ENCODE measurements at regions of chr15 and their contacts with region 1.

Region 1: DNA sequence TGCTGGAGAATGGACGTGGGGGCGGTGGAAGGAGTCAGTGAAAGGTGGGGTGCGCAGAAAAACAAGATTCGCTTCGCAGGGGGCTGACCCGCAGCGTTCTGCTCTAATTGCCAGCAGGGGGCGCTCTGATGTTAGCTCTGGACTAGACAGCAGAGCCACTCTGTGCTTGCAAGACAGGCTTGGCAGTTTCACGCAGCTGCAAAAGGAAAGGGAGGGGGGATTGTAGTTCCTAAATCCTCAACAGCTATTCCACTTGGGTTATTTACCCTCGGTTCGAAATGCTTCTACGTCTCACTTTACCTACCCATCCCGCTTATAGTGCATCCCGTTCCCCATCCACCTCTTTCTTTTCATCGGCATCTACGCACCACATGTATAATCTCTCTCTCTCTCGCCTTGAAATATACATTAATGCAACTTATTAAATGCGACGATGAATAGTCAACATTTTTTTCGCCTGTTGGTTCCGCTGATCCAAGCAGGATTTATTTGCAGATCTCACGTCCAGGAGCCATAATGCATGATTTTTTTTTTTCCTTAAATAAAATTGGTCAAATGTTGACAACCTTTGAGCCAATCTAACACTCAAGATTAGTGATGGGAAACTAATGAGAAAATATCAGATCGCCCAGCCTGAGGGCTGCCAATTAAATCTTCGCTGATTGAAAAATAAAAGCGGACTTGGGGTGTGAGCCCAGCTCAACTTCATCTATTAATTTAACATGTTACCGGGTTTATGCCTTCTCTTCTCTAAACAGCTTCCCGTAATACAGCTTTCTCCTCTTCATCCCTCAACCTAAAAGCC is 216.4 kb downstream of the MEIS2 start:
- DNase-seq: peak; percentile 62 to 77
- H3K4me3 ChIP-seq: peak overlapping the region; percentile 25 to 55 (median 41)
- H3K27ac ChIP-seq: no peak overlapping the region
- H3K4me1 ChIP-seq: peaks cover 0 to 8% of the 10 kb centered on the region in 2 donors
- H3K27me3 ChIP-seq: peaks cover 0 to 44% of the 10 kb centered on the region in 2 donors
- CTCF ChIP-seq: peak; percentile 69 to 86 (median 79)
- POLR2A ChIP-seq: no peak

Region 2: DNA sequence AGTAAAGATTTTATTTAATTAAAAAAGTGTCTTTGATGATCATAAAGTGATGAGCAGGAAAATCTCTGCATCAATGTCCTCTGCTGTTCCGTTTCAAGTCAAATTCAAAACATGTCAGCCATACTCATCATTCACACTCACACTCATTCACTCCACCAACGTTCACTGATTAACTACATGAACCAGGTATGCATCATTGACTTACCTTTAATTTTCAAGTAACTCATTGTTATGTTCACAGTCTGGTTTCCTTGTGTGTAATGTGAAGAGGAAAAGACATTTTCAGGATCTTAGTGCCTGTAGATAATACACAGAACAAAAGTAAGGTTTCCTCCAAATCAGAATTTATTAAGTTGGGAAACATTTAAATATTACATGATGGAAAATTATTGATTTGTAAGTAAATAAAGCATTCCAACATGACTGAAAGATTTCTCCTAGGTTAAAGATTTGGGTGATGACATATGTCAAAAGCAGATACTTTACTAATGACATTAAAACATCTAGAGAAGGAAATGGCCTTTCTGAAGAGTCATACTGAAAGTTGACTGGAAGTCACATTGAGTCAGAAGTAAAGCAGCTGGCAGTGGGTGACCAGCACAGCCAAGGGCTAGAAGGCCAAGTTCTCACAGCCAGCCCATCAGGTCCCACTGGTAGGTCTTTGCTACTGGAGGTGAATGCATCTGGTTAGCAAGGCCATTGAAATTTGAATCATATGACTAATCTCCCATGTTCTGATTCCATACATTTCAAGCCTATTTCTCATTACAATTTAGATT is 52.6 kb before region 1 on chr15:
- intact Hi-C with region 1: no loop called
- DNase-seq: no peak
- H3K4me3 ChIP-seq: no peak overlapping the region
- H3K27ac ChIP-seq: no peak overlapping the region
- H3K4me1 ChIP-seq: no peaks in the 10 kb centered on the region
- H3K27me3 ChIP-seq: no peaks in the 10 kb centered on the region
- CTCF ChIP-seq: no peak
- POLR2A ChIP-seq: no peak

Region 3: DNA sequence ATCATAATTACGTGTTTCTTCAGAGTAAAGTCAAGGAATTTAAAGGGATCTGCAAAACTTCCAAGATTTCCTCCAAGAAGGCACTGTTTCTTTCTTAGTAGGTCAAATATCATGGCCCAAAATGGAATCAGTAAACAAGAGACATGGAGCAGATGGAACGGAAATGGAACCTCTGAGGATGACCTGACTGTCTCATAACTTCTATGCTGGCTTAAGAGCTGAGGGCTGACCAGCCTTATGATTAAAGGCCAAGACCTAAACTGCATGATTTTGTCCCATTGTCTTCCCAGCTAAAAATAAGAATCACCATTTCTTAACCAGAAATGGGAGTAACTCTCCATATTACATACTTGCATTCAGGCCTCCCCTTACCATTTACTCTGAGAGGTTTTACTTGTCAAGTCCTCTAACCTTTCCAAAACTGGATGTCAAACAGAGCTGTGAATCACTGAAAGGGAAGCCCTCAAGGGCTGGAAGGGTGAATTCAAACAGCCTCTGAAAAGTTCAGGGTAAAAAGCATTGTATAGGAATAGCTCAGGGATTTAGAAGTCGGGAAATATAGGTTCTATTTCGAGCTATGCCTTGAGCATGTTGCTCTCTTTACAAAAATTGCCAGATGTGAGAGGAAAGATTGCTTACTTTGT is 112.7 kb after region 1 on chr15:
- intact Hi-C with region 1: no loop called
- DNase-seq: no peak
- H3K4me3 ChIP-seq: no peak overlapping the region
- H3K27ac ChIP-seq: no peak overlapping the region
- H3K4me1 ChIP-seq: no peaks in the 10 kb centered on the region
- H3K27me3 ChIP-seq: no peaks in the 10 kb centered on the region
- CTCF ChIP-seq: no peak
- POLR2A ChIP-seq: no peak

Region 4: GRCh38 chr15:37100109-37100965 is 216.4 kb after region 1 on chr15 and contains the start of gene MEIS2:
- intact Hi-C with region 1: loop called (anchors 10 kb)
- DNase-seq: peak; percentile 84 to 85
- H3K4me3 ChIP-seq: peak within 1 kb of the TSS; percentile 69 to 76 (median 72)
- H3K27ac ChIP-seq: peak within 1 kb of the TSS; percentile 91 to 95
- H3K4me1 ChIP-seq: no peaks in the 10 kb centered on the region
- H3K27me3 ChIP-seq: peaks cover 0 to 6% of the 10 kb centered on the region in 2 donors
- CTCF ChIP-seq: no peak
- POLR2A ChIP-seq: peak; percentile 72
- total RNA-seq, gene MEIS2: 18.2 to 55.8 (median 28.5) TPM

Region 5: DNA sequence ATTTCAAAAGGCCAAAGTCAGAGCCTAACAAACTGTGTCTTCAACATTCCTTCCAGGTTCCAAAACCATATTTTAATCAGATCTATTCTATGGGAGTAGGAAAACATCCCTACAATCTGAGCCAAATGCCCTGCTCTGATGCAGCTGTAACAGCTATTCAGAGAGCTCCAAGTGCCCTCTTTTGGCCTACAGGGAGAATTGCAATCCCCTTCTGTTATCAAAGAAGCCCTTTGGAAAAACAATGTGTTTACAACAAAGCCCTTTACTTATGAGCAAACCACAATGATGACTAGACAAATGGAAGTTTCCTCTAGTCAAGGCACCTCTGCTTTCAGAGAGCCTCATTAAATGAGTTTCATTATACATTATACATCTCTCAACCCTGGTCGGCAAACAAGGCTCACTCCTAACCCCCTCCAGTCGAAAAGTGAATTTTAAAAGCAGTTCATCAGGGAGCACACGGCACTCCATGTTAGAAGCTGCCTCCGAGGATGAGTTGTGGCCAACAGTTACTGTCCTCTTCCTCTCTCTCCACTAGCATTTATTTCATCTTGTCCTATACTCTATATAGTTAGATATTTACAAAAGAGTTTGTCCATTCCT is 1008.0 kb after region 1 on chr15:
- intact Hi-C with region 1: loop called (anchors 10 kb)
- DNase-seq: no peak
- H3K4me3 ChIP-seq: no peak overlapping the region
- H3K27ac ChIP-seq: no peak overlapping the region
- H3K4me1 ChIP-seq: no peaks in the 10 kb centered on the region
- H3K27me3 ChIP-seq: no peaks in the 10 kb centered on the region
- CTCF ChIP-seq: peak in 2 of 3 donors; percentile 45 to 69
- POLR2A ChIP-seq: no peak